ENCODE measurements at regions of chr5 and their contacts with region 1.

Region 1: GRCh38 chr5:10467240-10468198 is 25.8 kb downstream of the ROPN1L start:
- DNase-seq: no peak
- CTCF ChIP-seq: no peak

Region 2: DNA sequence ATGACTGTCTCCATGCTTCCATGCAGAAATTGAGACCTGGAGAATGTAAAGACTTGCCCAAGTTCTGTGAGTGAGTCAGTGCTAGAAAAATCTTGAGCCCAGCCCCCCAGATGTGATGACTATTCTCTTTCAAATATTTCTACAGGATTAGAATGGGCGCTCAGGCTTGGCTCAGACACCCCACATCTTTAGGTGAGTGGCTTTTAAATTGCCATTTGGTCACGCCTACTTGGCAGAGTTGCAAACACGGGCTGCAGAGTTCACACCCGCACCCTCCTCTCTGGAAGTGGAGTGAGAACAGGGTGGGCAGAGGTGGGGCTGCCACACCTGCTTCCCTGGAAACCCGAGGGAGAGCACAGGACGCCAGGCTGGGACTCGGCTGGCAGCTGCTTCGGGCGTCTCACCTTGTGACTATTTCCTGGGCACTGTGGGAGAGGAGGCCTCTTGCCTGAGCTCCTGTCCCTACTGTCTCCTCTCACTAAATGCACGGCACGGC is 11.8 kb after region 1 on chr5:
- CTCF ChIA-PET with region 1: interaction called, 11 read pairs
- POLR2A ChIA-PET with region 1: no interaction called
- DNase-seq: no peak
- CTCF ChIP-seq: no peak

Measured in GM10248 (cell line).